ENCODE measurements at regions of chr7 and their contacts with region 1.

Region 1: DNA sequence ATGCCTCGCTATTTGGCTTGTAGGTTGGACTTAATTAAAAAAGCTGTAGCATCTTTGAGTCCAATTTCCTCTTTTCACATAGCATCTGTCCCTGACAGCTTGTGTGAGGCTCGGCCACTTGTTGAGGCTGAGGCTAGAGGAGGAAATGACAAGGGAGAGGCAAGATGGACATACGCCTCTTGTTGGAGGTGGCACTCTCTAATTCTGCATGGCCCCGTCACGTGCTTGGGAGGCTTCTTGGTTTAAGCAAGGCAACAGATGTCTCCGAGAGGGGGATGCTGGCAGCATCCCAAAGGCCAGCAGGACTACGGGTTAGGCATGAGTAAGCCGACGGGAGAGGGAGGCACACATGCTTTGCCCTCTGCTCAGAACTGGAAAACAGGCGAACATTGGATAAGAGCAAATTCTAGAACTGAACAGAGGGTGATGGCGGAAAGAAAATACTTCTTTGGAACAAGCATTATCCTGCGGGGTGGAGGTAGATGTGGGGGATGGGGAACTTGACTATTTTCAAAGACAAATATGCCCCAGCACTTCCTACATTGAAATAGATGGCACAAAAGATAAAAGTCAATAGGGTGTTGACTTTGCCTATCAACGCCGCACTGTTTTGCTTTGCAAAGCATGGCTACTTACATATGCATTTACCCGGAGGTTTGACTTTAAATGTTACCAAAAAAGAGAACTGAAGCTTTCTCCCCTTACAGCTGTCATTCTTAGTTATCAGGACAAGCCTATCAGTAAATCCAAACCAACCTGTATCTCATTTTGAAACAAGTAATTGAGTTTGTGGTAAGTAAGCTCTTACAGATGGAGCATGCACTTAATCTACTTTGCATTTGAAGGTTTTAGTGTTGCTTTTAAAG is 94.8 kb downstream of the CHN2 start:
- DNase-seq: no peak

Region 2: GRCh38 chr7:29239638-29240037 is 49.8 kb before region 1 on chr7:
- intact Hi-C with region 1: loop called in 1 of 2 experiments (anchors 1 kb)
- DNase-seq: no peak

Region 3: GRCh38 chr7:29319719-29320521 is 30.5 kb after region 1 on chr7:
- intact Hi-C with region 1: no loop called
- DNase-seq: no peak